ENCODE measurements at regions of chrX and their contacts with region 1.

Region 1: GRCh38 chrX:44244008-44244407 is 99.5 kb downstream of the EFHC2 start:
- DNase-seq: no peak
- ATAC-seq: no peak
- H3K4me3 Mint-ChIP-seq: no peak overlapping the region
- H3K27ac Mint-ChIP-seq: no peak overlapping the region
- H3K4me1 Mint-ChIP-seq: peaks cover 12% of the 10 kb centered on the region
- H3K27me3 Mint-ChIP-seq: no peaks in the 10 kb centered on the region

Region 2: DNA sequence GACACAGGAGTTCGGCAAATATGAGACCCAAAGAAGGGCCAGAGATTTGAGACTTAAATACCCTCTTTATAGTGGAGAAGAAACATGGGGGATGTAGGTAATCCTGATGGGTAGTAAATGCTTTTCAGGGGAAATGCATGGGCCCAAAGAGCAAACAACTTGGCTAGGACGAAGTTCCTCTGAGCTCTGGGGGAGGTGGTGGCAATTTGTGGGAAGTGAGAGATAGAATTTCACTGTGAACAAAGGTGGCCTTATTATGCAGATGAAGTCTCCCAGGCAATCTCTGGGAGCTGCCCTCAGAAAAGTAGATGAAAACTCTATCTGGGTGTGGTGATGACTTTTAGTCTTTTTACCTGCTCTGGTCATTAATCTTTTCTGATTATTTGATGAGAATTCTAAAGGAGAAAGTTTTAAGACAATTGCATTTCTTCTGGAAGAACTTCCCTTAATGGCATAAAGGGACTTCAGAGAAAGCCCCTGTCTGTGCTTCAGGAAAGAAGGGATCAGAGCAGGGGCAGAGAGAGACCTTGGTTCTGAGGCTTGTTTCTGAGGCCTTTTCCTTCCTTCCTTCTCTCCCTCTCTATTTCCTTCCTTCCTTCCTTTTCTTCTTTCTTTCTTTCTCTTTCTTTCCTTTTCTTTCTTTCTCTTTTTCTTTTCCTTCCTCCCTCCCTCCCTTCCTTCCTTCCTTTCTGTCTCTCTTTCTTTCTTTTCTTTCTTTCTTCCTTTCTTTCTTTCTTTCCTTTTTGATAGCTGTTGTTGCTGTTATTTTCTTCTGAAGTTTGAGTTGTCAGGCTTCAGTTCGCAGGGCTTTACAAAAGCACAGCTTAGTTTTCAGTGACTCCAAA is 625.4 kb before region 1 on chrX:
- CTCF ChIA-PET with region 1: no interaction called
- POLR2A ChIA-PET with region 1: no interaction called
- intact Hi-C with region 1: no loop called
- DNase-seq: no peak
- ATAC-seq: no peak
- H3K4me3 Mint-ChIP-seq: no peak overlapping the region
- H3K27ac Mint-ChIP-seq: no peak overlapping the region
- H3K4me1 Mint-ChIP-seq: peaks cover 3% of the 10 kb centered on the region
- H3K27me3 Mint-ChIP-seq: peaks cover 9% of the 10 kb centered on the region

Region 3: DNA sequence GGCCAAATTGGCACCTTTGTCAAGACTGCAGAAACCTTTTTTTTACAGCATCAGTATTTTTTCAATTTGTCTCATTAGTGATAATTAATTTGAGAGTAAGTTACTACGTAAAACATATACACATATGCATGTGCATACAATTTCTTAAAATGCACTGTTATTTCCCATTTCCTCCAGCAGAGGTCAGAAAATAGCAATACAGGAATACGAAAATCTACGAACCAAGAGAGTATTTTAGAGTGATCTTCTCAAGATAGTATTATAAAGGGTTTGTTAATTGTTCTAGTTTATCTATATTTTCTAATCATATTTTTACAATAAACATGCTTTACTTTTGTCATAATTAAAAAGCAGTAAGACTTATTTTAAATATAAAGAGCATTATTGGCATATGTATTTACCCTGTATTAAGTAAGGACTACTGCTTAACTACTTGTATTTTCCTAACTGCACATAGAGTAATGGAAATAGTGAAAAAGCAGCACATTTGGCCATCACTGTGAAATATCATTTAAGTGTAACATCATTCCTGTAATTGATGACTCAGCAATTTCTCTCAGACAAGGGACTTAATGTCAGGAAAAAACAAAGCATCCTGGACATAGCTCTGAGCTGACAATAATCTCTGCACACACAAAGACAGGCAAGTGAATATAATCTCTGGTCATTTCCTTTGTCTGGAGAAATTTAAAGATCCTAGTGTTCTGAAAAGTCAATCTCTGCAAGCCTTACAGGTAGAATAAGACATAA is 407.4 kb before region 1 on chrX:
- CTCF ChIA-PET with region 1: interaction called, 4 read pairs
- POLR2A ChIA-PET with region 1: no interaction called
- intact Hi-C with region 1: loop called in 1 of 2 experiments (anchors 5 kb)
- DNase-seq: no peak
- ATAC-seq: no peak
- H3K4me3 Mint-ChIP-seq: no peak overlapping the region
- H3K27ac Mint-ChIP-seq: no peak overlapping the region
- H3K4me1 Mint-ChIP-seq: no peaks in the 10 kb centered on the region
- H3K27me3 Mint-ChIP-seq: no peaks in the 10 kb centered on the region

Region 4: DNA sequence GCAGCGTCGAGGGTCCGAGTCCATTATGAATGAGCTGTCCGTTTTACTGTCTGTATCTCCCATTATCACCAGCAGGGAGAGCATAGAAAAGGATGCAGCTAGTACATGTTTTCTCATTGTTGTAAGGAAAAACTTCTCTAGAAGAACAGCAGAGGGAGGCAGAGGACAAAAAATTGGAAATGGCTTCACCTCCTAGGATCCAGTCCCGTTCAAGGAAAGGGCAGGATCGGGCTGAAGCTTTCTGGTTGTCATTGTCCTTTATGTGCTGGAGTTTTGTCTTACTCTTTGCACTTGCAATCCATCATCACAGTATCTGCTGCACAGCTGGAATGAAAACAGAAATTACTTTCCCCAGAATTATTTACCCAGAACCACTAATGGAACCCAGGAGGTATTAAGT is 285.5 kb before region 1 on chrX:
- CTCF ChIA-PET with region 1: interaction called, 21 read pairs
- POLR2A ChIA-PET with region 1: no interaction called
- intact Hi-C with region 1: loop called (anchors 1 to 5 kb)
- DNase-seq: peak; percentile 6
- ATAC-seq: peak; percentile 65
- H3K4me3 Mint-ChIP-seq: no peak overlapping the region
- H3K27ac Mint-ChIP-seq: no peak overlapping the region
- H3K4me1 Mint-ChIP-seq: peaks cover 2% of the 10 kb centered on the region
- H3K27me3 Mint-ChIP-seq: no peaks in the 10 kb centered on the region

Region 5: GRCh38 chrX:43969504-43970501 is 274.2 kb before region 1 on chrX:
- CTCF ChIA-PET with region 1: no interaction called
- POLR2A ChIA-PET with region 1: no interaction called
- intact Hi-C with region 1: loop called in 1 of 2 experiments (anchors 5 kb)
- DNase-seq: no peak
- ATAC-seq: no peak
- H3K4me3 Mint-ChIP-seq: no peak overlapping the region
- H3K27ac Mint-ChIP-seq: no peak overlapping the region
- H3K4me1 Mint-ChIP-seq: peaks cover 9% of the 10 kb centered on the region
- H3K27me3 Mint-ChIP-seq: peaks cover 12% of the 10 kb centered on the region

Region 6: GRCh38 chrX:44343412-44344141 is 99.6 kb after region 1 on chrX and contains the start of gene EFHC2:
- CTCF ChIA-PET with region 1: no interaction called
- POLR2A ChIA-PET with region 1: no interaction called
- intact Hi-C with region 1: loop called in 1 of 2 experiments (anchors 5 kb)
- DNase-seq: peak; percentile 59
- ATAC-seq: peak; percentile 63
- H3K4me3 Mint-ChIP-seq: peak within 1 kb of the TSS; percentile 73
- H3K27ac Mint-ChIP-seq: peak within 1 kb of the TSS; percentile 77
- H3K4me1 Mint-ChIP-seq: peaks cover 11% of the 10 kb centered on the region
- H3K27me3 Mint-ChIP-seq: no peaks in the 10 kb centered on the region
- total RNA-seq, gene EFHC2: 0.30 to 0.46 TPM